Activated CD4-positive, alpha-beta memory T cell treated with anti-CD3 and anti-CD28 coated beads for 36 hours (primary cell): ENCODE measurements at regions of chr12 and their contacts with region 1.

Region 1: DNA sequence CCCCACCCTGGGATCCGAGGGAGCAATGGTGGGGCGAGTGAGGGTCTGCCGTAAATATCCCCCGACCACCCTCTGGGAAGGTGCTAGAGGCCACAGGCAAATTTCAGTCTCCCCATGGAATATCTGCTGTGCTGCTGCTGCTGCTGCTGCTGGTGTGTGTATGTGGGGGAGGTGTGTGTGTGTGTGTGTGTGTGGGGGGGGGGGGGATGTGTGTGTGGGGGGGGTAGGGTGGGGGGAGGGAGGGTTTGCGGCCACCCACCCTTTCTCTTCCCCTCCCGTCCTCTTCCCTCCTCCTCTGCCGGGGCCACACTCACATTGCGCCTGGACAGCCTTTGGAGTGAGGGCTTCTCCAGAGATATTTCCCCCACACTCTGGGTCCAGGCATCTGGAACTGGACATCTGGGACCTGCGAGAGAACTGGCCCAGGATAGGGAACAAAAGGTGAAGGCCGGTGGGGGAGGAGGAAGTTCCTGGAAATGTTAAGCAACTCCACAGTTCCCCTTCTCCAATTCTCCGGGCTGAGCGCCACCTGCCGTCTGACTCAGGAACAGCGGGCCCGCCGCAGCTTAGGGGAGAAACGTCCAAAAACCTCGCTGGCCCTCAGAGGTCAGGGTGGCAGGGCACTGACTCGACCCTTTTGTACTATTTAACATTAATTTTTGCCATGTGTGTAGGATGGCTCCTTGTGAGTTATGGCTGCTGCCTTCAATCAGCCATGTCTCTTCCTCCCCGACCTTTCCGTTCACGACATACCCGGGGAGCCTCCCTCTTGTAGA is at the start of gene C1RL:
- DNase-seq: peak; percentile 89
- H3K4me3 Mint-ChIP-seq: peak within 1 kb of the TSS; percentile 95
- H3K27ac Mint-ChIP-seq: peak within 1 kb of the TSS; percentile 99
- H3K4me1 Mint-ChIP-seq: peaks cover 39% of the 10 kb centered on the region
- H3K27me3 Mint-ChIP-seq: no peaks in the 10 kb centered on the region
- total RNA-seq, gene C1RL: 17.1 to 22.6 TPM

Region 2: GRCh38 chr12:6927379-6928024 is 181.5 kb before region 1 on chr12 and contains the start of gene ATN1:
- CTCF ChIA-PET with region 1: interaction called, 5 read pairs
- POLR2A ChIA-PET with region 1: no interaction called
- intact Hi-C with region 1: loop called (anchors 2 kb)
- DNase-seq: peak; percentile 61
- H3K4me3 Mint-ChIP-seq: peak within 1 kb of the TSS; percentile 84
- H3K27ac Mint-ChIP-seq: peak within 1 kb of the TSS; percentile 89
- H3K4me1 Mint-ChIP-seq: peaks cover 64% of the 10 kb centered on the region
- H3K27me3 Mint-ChIP-seq: no peaks in the 10 kb centered on the region
- total RNA-seq, gene ATN1: 34.8 to 37.8 TPM

Region 3: DNA sequence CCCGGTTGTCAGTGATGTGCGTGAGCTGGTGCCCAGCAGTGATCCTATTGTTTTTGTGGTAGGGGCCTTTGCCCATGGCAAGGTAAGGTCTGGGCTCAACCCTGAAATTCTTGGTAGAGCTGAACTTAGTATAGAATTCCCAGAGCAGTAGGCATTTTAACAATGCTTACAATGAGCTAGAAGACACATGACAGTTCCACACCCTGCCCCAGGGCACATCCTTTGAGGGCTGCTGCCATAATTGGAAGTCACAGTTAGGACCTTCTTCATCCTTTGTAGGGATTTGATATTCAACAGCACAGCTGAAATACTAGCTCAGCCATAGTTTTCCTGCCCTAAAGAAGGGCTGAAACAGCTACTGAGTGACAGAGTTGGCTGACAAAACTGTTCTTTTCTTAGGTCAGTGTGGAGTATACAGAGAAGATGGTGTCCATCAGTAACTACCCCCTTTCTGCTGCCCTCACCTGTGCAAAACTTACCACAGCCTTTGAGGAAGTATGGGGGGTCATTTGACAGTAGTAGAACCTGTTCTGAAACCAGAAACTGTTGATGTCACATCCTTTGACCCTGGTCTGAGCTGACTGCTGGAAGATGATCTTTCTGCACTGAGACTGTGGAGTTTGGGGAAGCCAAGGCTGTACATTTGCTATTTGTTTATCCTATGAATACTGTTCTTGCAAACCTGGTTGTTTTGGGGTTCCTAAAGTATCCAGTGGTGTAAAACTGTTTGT is 133.5 kb before region 1 on chr12:
- CTCF ChIA-PET with region 1: interaction called, 10 read pairs
- POLR2A ChIA-PET with region 1: no interaction called
- intact Hi-C with region 1: no loop called
- DNase-seq: no peak
- H3K4me3 Mint-ChIP-seq: no peak overlapping the region
- H3K27ac Mint-ChIP-seq: peak overlapping the region; percentile 29
- H3K4me1 Mint-ChIP-seq: peaks cover 23% of the 10 kb centered on the region
- H3K27me3 Mint-ChIP-seq: no peaks in the 10 kb centered on the region

Region 4: DNA sequence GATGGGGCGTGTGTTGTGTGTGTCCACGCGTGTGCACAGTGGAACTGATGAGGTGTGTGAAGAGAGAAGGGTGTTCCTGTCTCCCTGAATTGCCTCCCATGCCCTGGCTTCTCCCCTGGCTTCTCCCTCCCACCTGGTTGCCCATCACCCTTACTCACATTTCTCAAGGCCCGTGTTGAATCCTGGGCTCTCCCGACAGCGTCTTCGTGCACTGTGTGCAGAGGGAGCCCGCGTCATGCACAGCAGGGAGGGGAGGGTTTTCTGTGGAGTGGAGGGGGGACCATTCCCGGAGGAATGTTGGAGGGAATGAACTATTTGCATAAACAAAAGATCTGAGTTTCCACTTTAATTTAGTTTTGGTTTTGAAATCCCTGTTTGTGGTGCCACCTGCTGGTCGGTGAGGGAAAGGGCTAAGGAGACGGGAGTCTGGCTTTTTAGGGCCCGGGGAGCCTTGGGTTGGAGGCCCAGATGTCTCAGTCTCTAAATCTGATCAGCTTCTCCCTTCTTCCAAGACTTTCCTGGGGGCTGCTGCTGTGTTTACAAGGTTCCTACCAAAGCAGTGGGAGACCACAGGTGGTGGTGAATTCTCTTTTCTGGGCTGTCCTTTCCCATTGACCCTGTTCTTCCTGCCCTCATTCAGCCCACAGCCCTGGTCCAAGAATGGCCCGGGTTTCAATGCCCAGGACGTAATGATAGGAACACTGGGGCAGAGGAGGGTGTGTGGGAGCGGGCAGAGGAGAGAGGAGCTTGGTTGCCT is 16.6 kb before region 1 on chr12 and contains the start of gene C1R:
- CTCF ChIA-PET with region 1: interaction called, 26 read pairs
- POLR2A ChIA-PET with region 1: interaction called, 3 read pairs
- intact Hi-C with region 1: loop called (anchors 1 kb)
- DNase-seq: peak; percentile 79
- H3K4me3 Mint-ChIP-seq: peak within 1 kb of the TSS; percentile 76
- H3K27ac Mint-ChIP-seq: no peak within 1 kb of the TSS
- H3K4me1 Mint-ChIP-seq: peaks cover 7% of the 10 kb centered on the region
- H3K27me3 Mint-ChIP-seq: no peaks in the 10 kb centered on the region
- total RNA-seq, gene C1R: 1.4 to 2.2 TPM

Region 5: DNA sequence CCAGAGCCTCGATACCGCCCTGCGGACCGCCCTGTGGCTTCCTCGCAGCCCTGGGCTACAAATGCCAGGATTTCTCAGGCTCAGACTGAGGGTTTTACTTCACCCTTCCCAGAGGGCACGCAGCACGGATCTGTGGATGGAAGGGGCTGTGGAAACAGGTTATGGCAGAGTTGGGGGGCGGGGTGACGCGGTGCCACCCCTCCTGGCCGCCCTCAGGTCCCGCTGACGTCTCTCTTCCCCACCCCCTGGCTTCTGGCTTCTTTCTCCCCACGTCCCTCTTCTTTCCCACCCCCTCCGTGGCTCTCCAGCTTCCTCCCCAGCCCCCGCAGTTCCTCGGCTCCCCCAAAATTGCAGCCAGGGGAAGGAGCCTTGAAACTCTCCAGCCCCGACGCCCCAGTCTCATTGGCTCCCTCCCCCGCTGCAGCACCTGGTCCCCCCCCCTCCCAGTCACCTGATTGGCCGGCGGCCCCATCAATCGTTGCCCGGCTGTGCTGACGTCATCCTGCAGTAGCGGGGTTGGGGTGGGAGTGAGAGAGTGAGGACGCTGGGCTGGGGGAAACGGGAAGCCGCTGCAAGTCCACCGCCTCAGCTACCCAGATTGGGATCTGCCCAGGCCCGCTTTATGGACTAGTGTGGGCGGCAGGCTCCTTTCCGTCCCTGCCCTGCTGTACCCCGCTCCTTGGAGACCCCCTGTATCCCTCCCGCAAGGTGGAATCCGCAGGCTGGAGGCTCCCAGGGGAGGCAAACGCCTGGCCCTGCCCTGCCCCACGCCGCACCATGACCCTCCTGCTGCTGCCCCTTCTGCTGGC is 21.1 kb after region 1 on chr12 and contains the start of gene CLSTN3:
- CTCF ChIA-PET with region 1: interaction called, 5 read pairs
- POLR2A ChIA-PET with region 1: no interaction called
- intact Hi-C with region 1: loop called (anchors 1 kb)
- DNase-seq: peak; percentile 91
- H3K4me3 Mint-ChIP-seq: peak within 1 kb of the TSS; percentile 87
- H3K27ac Mint-ChIP-seq: peak within 1 kb of the TSS; percentile 65
- H3K4me1 Mint-ChIP-seq: peaks cover 28% of the 10 kb centered on the region
- H3K27me3 Mint-ChIP-seq: no peaks in the 10 kb centered on the region
- total RNA-seq, gene CLSTN3: 40.1 to 44.7 TPM